Dendritic cell treated with granulocyte-macrophage colony-stimulating factor and Interleukin-4, amounts not matched to agents 40 ng/mL and 50 ng/mL, for 4 days (primary cell): ENCODE measurements at regions of chr9 and their contacts with region 1.

Region 1: GRCh38 chr9:133485361-133486260 is 6.7 kb upstream of the SLC2A6 start:
- H3K4me3 Mint-ChIP-seq: no peak overlapping the region
- H3K27ac Mint-ChIP-seq: peak overlapping the region; percentile 34
- H3K4me1 Mint-ChIP-seq: peaks cover 7% of the 10 kb centered on the region
- H3K27me3 Mint-ChIP-seq: peaks cover 48% of the 10 kb centered on the region

Region 2: GRCh38 chr9:133406480-133407307 is 78.9 kb before region 1 on chr9:
- intact Hi-C with region 1: loop called (anchors 1 kb)
- H3K4me3 Mint-ChIP-seq: no peak overlapping the region
- H3K27ac Mint-ChIP-seq: no peak overlapping the region
- H3K4me1 Mint-ChIP-seq: peaks cover 10% of the 10 kb centered on the region
- H3K27me3 Mint-ChIP-seq: no peaks in the 10 kb centered on the region

Region 3: DNA sequence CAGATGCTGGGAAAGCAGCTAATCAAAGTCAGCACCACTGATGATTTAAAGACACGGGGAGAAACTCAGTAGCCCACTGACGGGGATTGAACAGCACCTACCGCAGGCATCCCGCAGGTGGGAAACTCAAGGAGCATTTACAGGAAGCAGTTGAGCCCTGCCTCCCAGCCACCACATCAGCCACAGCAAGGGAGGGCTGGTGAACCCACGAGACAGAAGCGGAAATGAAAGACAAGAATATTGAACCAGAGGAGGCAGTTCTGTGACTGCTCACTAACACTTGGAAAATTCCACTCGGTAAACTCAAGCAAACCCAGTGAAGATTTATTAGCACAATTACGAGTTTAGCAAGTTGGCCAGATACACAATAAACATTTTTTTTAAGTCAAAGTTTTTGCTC is 134.2 kb after region 1 on chr9:
- intact Hi-C with region 1: no loop called
- H3K4me3 Mint-ChIP-seq: no peak overlapping the region
- H3K27ac Mint-ChIP-seq: no peak overlapping the region
- H3K4me1 Mint-ChIP-seq: no peaks in the 10 kb centered on the region
- H3K27me3 Mint-ChIP-seq: peaks cover 38% of the 10 kb centered on the region